ENCODE measurements at regions of chr5 and their contacts with region 1.

Region 1: GRCh38 chr5:82641331-82642003 is 363.3 kb upstream of the RPS23 start:
- DNase-seq: peak; percentile 89
- ATAC-seq: peak; percentile 88
- H3K4me3 ChIP-seq: no peak overlapping the region
- H3K27ac ChIP-seq: 0 out of 2 replicates have a peak overlapping the region, but pooled peaks have one; percentile 10
- H3K4me1 ChIP-seq: peaks cover 22% of the 10 kb centered on the region
- H3K27me3 ChIP-seq: no peaks in the 10 kb centered on the region
- CTCF ChIP-seq: peak; percentile 76

Region 2: GRCh38 chr5:80777347-80778287 is 1863.8 kb before region 1 on chr5:
- CTCF ChIA-PET with region 1: no interaction called
- POLR2A ChIA-PET with region 1: no interaction called
- intact Hi-C with region 1: no loop called
- DNase-seq: no peak
- ATAC-seq: no peak
- H3K4me3 ChIP-seq: no peak overlapping the region
- H3K27ac ChIP-seq: no peak overlapping the region
- H3K4me1 ChIP-seq: peaks cover 10% of the 10 kb centered on the region
- H3K27me3 ChIP-seq: no peaks in the 10 kb centered on the region
- CTCF ChIP-seq: no peak

Region 3: DNA sequence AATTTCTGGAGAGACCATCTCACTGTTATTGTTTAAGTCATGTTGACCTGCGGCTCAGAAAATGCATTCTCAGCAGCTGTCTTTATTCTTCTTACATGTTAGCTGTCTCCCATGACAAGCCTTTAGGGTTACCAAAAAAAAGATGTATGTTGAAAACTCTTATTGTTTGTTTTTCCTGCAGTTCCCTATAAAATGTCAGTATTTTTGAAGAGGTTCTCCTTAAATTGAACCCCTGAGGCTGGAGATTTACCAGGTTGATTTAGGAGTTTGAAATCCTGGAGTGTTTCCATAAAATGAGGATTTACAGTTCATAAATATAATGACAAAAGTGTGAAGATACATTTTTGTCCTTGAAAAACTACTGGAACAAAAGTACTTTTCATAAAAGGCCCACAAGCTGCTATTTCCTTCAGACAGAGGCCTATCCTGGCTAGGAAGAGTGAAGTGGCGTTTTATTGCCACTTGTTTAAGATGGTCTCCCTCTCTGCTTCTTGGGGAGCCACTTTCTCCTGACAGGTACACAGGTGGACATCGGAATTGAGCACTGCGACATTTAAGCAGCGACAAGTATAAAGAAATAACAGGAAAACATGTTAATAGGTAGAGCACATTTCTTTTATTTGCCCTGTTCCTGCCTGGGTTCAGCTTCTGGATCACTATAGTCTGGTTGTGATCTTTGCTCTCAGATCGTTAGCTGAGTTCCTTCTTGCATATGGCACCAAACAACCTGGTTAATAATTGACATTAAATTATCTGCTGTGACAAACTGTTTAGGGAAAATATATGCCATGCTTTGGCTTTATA is 18.6 kb before region 1 on chr5:
- CTCF ChIA-PET with region 1: no interaction called
- POLR2A ChIA-PET with region 1: no interaction called
- intact Hi-C with region 1: no loop called
- DNase-seq: no peak
- ATAC-seq: no peak
- H3K4me3 ChIP-seq: no peak overlapping the region
- H3K27ac ChIP-seq: no peak overlapping the region
- H3K4me1 ChIP-seq: no peaks in the 10 kb centered on the region
- H3K27me3 ChIP-seq: no peaks in the 10 kb centered on the region
- CTCF ChIP-seq: no peak

Region 4: DNA sequence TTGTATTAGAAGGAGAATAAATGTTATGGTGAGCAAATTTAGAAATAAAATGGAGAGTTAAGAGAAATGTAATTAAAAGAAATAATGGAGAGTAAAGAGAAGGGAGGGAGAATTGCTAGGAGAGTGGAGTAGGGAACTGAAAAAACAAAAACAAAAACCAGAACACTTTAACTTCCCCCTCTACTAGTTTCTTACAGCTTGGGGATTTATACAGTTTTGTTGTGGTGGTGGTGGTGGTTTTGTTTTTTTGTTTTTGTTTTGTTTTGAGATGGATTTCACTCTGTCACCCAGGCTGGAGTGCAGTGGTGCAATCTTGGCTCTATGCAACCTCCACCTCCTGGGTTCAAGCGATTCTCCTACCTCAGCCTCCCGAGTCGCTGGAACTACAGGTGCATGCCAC is 113.3 kb after region 1 on chr5:
- CTCF ChIA-PET with region 1: no interaction called
- POLR2A ChIA-PET with region 1: no interaction called
- intact Hi-C with region 1: loop called (anchors 5 kb)
- DNase-seq: no peak
- ATAC-seq: peak; percentile 51
- H3K4me3 ChIP-seq: no peak overlapping the region
- H3K27ac ChIP-seq: peak overlapping the region; percentile 52
- H3K4me1 ChIP-seq: peaks cover 20% of the 10 kb centered on the region
- H3K27me3 ChIP-seq: no peaks in the 10 kb centered on the region
- CTCF ChIP-seq: no peak

Region 5: GRCh38 chr5:82793808-82794419 is 152.4 kb after region 1 on chr5:
- CTCF ChIA-PET with region 1: no interaction called
- POLR2A ChIA-PET with region 1: no interaction called
- intact Hi-C with region 1: loop called (anchors 5 kb)
- DNase-seq: peak; percentile 54
- ATAC-seq: no peak
- H3K4me3 ChIP-seq: no peak overlapping the region
- H3K27ac ChIP-seq: no peak overlapping the region
- H3K4me1 ChIP-seq: peaks cover 8% of the 10 kb centered on the region
- H3K27me3 ChIP-seq: no peaks in the 10 kb centered on the region
- CTCF ChIP-seq: peak; percentile 74

Region 6: GRCh38 chr5:82991678-82992323 is 350.3 kb after region 1 on chr5:
- CTCF ChIA-PET with region 1: no interaction called
- POLR2A ChIA-PET with region 1: no interaction called
- intact Hi-C with region 1: loop called (anchors 5 kb)
- DNase-seq: peak; percentile 91
- ATAC-seq: peak; percentile 99
- H3K4me3 ChIP-seq: no peak overlapping the region
- H3K27ac ChIP-seq: peak overlapping the region; percentile 80
- H3K4me1 ChIP-seq: peaks cover 21% of the 10 kb centered on the region
- H3K27me3 ChIP-seq: no peaks in the 10 kb centered on the region
- CTCF ChIP-seq: no peak

Region 7: GRCh38 chr5:83076742-83077661 is 435.5 kb after region 1 on chr5 and contains the starts of genes TMEM167A and XRCC4:
- CTCF ChIA-PET with region 1: no interaction called
- POLR2A ChIA-PET with region 1: no interaction called
- intact Hi-C with region 1: loop called (anchors 2 kb)
- DNase-seq: peak; percentile 98
- ATAC-seq: peak; percentile 100
- H3K4me3 ChIP-seq: peak within 1 kb of the TSS; percentile 94
- H3K27ac ChIP-seq: peak within 1 kb of the TSS; percentile 53
- H3K4me1 ChIP-seq: peaks cover 19% of the 10 kb centered on the region
- H3K27me3 ChIP-seq: no peaks in the 10 kb centered on the region
- CTCF ChIP-seq: no peak
- total RNA-seq, gene TMEM167A: 25.1 and 35.7 TPM in 2 replicates
- total RNA-seq, gene XRCC4: 11.5 and 13.8 TPM in 2 replicates